Cardiac septum (tissue), 1 donor: ENCODE measurements at regions of chr3 and their contacts with region 1.

Region 1: DNA sequence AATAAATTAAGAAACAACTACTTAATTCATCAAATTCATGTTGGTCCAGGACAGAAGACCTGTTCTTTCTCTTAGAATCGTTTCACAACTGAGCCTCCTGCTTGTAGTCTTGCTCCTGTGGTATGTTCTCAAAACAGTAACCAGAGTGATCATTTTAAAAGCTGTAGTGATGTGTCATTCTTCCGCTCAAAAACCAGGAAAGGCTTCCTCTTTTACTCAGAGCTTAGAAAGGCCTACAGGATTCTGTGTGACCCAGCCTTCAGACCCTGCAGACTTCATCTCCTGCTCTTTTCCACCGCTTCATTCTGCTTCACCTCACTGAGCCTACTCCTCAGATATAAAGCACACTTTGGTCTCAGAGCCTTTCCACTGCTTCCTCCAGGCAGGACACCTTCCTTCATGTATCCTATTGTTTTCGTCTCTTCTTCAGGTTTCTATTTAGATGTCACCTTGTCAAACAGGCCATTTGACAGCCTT is 22.7 kb downstream of the ST6GAL1 start:
- DNase-seq: no peak

Region 2: DNA sequence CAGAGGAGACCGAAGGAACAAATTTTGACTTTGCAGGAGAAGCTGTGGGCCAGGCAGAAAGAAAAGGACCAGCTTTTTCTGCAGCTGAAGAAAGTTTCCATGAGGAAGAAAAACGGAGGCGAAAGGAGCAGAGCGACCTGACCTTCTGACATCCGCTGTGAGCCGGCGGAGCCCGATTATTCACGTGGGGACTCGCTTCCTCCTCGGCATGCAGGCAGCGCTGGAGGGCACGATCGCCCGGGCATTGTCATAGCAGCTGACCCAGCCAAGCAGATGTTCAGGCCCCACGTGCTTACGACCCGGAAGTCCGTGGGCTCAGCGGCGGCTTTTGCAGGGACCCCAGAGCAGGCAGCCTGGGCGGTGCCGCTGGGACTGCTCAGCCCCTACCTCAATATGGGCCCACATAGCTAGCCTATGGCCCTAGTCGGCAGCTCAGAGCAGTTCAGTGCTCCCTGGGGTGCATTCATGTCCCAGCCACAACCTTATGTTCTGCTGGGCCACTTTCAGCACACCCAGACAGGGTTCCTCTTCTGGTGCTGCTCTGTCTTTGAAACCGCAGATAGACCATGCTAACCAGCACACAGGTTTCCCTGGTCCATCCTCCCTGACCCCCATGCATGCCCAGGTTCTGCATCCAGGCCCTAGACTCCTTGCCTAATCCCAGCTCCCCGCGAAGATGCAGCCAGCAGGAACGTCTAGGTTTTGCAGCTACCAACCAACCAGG is 180.2 kb before region 1 on chr3:
- intact Hi-C with region 1: no loop called
- DNase-seq: peak; percentile 91

Region 3: DNA sequence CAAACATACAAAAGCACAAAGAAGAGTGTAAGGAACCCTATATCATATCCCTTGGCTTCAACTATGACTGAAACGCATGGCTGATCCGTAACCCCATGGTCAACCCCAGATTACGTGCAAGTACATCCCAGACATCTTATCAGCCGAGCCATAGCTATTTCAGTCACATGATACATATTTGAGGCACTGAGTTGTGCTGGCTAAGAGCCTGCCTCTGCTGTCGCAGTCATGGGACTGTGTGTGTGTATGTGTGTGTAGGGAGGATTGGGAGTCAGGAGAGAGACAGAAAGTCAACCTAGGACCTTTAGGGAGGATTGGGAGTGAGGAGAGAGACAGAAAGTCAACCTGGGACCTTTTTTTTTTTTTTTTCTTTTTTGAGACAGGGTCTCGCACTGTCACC is 14.3 kb before region 1 on chr3:
- intact Hi-C with region 1: loop called (anchors 1 kb)
- DNase-seq: no peak

Region 4: GRCh38 chr3:186976837-186977750 is 24.0 kb after region 1 on chr3:
- intact Hi-C with region 1: loop called (anchors 2 kb)
- DNase-seq: peak; percentile 82

Region 5: DNA sequence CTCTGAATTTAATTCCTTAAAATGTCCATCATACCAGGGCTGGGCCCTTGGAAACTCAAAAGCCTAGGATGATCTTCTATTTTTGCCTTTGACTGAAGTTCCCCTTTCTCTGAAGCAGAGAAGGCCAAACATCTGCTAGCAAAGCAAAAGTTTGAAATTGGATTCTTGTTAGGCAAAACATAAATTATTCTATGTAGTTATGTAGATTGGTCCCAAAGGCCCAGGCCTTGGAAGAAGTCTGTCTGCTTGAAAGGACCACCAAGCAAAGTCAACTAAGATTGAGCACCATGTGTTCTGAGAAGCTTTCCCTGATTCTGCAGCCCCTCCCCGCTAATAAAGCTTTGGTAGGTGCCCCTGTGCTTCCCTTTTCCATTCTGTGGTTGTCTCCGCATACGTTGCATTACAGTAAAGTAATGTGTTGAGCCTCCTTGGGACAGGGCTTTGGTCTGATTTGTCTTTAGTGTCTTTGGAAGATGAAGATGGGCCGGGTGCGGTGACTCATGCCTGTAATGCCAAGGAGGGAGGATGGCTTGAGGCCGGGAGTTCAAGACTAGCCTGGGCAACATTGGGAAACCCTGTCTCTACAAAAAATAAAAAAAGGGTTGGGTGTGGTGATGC is 129.8 kb after region 1 on chr3:
- intact Hi-C with region 1: no loop called
- DNase-seq: no peak